GM10248 (cell line): ENCODE measurements at regions of chr2 and their contacts with region 1.

Region 1: GRCh38 chr2:174465327-174465726 is 21.5 kb downstream of the GPR155 start:
- DNase-seq: no peak
- CTCF ChIP-seq: no peak

Region 2: DNA sequence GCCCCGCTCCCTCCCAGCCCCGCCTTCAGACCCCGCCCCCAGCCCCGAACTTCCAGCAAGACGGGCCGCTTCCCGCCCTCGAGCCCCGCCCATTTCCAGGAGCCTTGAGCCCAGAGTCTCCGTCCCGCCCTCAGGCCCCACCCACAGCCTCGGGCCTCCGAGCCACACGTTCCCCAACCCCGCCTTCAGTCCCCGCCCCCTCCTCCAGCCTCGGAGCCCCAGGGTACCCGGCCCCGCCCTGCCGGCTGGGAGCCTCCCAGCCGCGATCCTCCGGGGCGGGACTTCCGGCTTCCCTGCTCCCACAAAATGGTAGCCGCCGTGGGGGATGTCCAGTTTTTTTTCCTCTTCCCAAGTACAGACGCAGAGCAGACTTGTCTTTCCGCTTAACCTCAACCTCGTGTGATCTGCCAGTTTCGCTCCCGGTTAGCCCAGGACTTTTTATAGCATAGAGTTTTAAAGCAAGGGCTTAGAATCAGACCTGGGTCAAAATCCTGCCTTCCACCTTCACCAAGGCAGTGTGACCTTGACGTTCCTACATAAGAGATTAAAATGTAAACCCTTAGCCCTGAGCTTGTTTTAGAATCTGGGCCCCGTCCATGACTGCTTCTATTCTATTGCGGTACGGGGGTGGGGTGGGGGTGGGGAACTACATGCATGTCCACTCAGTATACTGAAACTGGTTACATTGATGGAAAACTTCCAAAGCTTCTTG is 21.9 kb after region 1 on chr2:
- CTCF ChIA-PET with region 1: interaction called, 65 read pairs
- POLR2A ChIA-PET with region 1: no interaction called
- DNase-seq: peak; percentile 99
- CTCF ChIP-seq: no peak

Region 3: GRCh38 chr2:174522553-174522952 is 57.2 kb after region 1 on chr2:
- CTCF ChIA-PET with region 1: interaction called, 54 read pairs
- POLR2A ChIA-PET with region 1: no interaction called
- DNase-seq: no peak
- CTCF ChIP-seq: no peak

Region 4: GRCh38 chr2:174553811-174554493 is 88.6 kb after region 1 on chr2:
- CTCF ChIA-PET with region 1: interaction called, 136 read pairs
- POLR2A ChIA-PET with region 1: no interaction called
- DNase-seq: peak; percentile 48
- CTCF ChIP-seq: no peak

Region 5: GRCh38 chr2:174603280-174603679 is 138.0 kb after region 1 on chr2:
- CTCF ChIA-PET with region 1: interaction called, 20 read pairs
- POLR2A ChIA-PET with region 1: no interaction called
- DNase-seq: peak; percentile 35
- CTCF ChIP-seq: peak; percentile 60

Region 6: DNA sequence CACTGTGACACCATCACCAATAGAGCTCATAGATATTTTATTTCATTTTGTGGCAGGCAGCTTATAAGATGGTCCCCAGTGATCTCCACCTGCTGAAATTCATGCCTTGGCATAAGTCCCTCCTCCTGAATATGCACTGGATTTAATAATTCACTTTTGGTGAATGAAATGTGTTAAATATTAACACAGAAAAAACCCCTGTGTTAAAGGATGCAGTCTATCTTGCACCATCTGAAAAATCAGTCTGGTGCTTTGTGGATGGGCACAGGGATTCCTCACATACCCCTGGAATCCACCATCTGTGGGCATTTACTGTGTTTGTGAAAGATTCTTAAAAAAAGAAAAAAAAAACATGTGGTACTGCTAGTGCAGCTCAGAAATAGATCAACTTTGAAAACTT is 158.4 kb after region 1 on chr2:
- CTCF ChIA-PET with region 1: no interaction called
- POLR2A ChIA-PET with region 1: no interaction called
- DNase-seq: no peak
- CTCF ChIP-seq: no peak

Region 7: DNA sequence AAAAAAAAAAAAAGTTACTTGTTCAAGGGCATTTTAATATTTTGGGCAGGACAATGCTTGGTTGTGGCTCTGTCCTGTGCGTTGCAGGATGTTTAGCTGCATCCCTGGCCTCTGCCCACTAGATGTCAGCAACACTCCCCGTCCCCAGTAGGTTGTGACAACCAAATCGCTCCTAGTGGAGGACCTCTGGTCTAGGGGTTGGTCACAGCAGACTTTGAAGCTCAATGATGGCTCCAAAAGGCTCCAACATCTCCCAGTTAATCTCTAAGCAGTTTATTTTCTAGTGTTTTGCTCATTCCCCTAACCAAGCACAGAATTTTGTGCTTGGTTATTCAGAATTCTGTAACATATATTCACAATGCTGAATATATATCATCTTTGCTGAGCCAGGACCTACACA is 231.9 kb after region 1 on chr2:
- CTCF ChIA-PET with region 1: interaction called, 15 read pairs
- POLR2A ChIA-PET with region 1: no interaction called
- DNase-seq: peak; percentile 77
- CTCF ChIP-seq: peak; percentile 86